AG04449 (cell line): ENCODE measurements at regions of chrX and their contacts with region 1.

Region 1: DNA sequence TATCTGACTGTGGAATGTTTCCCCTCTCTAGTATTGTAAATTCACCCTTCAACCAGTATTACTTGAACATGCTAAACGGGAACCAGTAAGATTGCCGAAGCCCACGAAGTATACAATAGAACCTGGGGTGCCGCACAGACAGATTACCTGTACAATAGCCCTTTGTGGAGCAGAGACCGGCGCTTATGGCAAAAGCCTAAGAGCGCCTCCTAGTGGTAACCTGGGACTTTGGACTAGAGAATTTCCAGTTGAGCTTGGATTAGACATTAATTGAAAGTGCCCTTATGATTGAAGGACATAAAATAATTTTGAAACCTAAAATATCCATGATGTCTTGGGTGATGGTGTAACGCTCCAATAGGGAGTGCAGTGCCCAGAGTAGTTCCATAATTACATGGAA is 14.1 kb downstream of the ZNF157 start:
- DNase-seq: no peak
- H3K4me3 ChIP-seq: no peak overlapping the region
- CTCF ChIP-seq: peak; percentile 57

Region 2: DNA sequence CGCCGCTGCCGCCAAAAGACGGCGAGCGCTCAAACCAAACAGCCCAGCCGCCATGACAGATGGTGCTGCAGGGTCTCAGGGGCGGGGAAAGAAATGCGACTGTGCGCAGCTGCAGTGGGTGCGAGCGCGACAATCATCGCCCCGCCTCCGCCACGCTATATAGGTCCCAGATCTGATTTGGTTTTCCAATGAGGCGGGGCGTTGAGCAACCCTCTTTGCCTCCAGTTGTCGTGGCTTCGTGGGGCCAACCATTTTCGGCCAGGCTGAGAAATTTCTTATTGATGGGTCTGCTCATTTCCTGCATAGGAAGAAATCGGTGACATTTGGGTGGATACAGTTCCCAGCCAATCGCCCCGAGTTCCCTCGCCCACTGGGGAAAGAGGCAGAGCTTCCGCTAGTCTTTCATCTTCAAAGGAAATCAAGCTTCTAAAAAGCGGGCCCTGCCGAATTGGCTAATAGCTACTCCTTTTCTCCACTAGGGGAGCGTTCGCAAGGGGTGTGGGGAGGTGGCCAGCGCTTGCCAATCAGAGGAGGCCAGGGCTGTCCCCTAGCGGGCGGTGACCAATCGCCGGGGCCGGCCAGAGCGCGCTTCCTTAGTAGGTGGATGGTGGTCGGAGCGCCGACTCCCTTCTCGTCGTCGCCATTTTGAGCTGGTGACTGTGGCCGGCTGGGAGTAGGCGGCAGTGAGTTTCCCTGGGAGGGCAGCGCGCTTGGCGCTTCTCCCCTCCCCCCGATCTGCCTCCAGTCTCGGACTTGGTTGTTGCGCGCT is 239.7 kb before region 1 on chrX and contains the starts of genes NDUFB11 and RBM10:
- CTCF ChIA-PET with region 1: no interaction called
- POLR2A ChIA-PET with region 1: no interaction called
- DNase-seq: peak; percentile 72
- H3K4me3 ChIP-seq: peak within 1 kb of the TSS; percentile 80
- CTCF ChIP-seq: peak; percentile 66

Region 3: DNA sequence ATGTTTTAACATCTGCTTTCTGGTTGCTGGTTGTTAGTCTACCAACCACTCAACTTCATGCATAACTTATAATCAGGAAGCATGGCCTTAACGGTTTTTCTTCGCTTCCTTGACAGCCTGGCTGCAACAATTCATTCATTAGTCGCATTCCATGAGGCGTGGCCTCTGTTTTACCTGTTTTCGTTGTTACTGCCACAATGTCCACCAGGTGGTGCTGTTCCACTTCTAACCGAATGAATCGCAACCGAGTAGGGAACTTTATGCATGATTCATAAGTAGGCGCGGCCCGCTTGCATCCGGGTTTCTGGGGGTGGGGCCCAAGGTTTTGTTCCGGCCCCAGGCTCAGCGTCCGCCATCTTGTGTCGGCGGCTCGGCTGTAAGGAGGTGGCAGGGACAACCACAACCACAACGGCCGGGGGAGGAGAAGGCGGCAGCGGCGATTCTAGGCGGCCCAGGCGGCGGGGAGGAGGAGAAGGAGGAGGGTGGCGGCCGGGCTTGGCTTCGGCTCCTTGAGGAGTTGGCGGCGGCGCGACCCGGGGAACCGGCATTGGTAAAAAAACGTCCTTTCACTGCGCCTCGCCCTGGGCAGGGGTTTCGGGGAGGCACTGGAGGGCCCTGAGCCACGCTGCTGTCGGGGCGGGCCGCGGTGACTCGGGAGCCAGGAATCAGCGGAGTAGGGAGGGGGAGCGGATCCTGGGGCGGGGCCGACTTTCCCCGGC is 190.9 kb before region 1 on chrX and contains the start of gene UBA1:
- CTCF ChIA-PET with region 1: interaction called, 26 read pairs
- POLR2A ChIA-PET with region 1: interaction called, 3 read pairs
- DNase-seq: peak; percentile 65
- H3K4me3 ChIP-seq: peak within 1 kb of the TSS; percentile 72
- CTCF ChIP-seq: peak; percentile 43

Region 4: DNA sequence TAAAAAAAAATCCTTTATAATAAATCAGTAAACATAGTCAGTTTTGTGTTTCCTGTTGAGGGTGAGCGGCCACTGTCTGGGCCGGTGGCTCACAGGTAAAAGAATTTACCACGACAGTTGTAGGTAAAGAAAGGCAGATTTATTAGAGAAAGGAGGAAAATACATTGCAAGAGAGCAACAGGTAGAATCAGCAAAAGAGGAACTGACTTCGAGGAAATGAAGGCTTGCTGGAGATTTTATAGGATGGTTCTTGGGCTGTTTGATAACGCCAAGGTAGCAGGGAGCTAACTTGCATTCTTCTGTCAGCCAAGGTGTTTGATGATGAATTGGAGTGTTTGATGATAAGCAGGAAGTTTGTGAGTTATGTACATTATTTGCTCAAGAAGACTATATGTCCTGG is 11.3 kb before region 1 on chrX:
- CTCF ChIA-PET with region 1: interaction called, 17 read pairs
- POLR2A ChIA-PET with region 1: no interaction called
- DNase-seq: no peak
- H3K4me3 ChIP-seq: no peak overlapping the region
- CTCF ChIP-seq: no peak

Region 5: GRCh38 chrX:47992093-47992375 is 607.5 kb after region 1 on chrX:
- CTCF ChIA-PET with region 1: no interaction called
- POLR2A ChIA-PET with region 1: no interaction called
- DNase-seq: no peak
- H3K4me3 ChIP-seq: no peak overlapping the region
- CTCF ChIP-seq: no peak